Naive thymus-derived CD4-positive, alpha-beta T cell (primary cell): ENCODE measurements at regions of chr16 and their contacts with region 1.

Region 1: GRCh38 chr16:1474796-1475551 is at the start of gene CLCN7:
- DNase-seq: peak; percentile 79 to 95 (median 84)
- ATAC-seq: peak; percentile 91
- H3K4me3 ChIP-seq: peak within 1 kb of the TSS; percentile 67
- H3K4me3 Mint-ChIP-seq: peak within 1 kb of the TSS; percentile 80 to 90 (median 85)
- H3K27ac ChIP-seq: peak within 1 kb of the TSS; percentile 100
- H3K27ac Mint-ChIP-seq: peak within 1 kb of the TSS; percentile 77 to 95 (median 88)
- H3K4me1 ChIP-seq: peaks cover 13 to 20% of the 10 kb centered on the region in 2 donors
- H3K4me1 Mint-ChIP-seq: peaks cover 18 to 52% (median 42%) of the 10 kb centered on the region in 7 donors
- H3K27me3 ChIP-seq: no peaks in the 10 kb centered on the region
- H3K27me3 Mint-ChIP-seq: no peaks in the 10 kb centered on the region
- total RNA-seq, gene CLCN7: 74.8 to 140 (median 115) TPM

Region 2: DNA sequence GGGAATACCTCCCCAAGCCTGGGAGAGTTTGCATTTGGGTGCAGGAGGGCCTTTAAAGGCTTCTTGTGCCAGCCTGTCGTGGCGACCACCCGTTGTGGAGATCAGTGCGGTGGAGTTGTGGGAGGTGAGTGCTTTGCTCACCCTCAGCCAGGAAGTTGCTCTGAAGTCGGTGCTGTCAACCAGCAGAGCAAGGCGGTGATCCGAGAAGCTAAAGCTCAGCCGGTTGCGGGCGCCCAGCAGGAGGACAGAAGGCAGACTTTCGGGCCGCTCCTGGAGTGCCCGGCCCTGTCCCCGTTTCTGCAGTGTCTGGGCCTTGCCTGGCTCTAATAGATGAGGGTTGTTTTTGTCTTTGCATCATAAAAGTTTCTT is 164.2 kb before region 1 on chr16:
- CTCF ChIA-PET with region 1: no interaction called
- POLR2A ChIA-PET with region 1: no interaction called
- intact Hi-C with region 1: no loop called
- DNase-seq: peak in 3 of 9 donors; percentile 36 to 42 (median 41)
- ATAC-seq: no peak
- H3K4me3 ChIP-seq: peak overlapping the region; percentile 63
- H3K4me3 Mint-ChIP-seq: peak overlapping the region; percentile 92 to 100 (median 98)
- H3K27ac ChIP-seq: peak overlapping the region; percentile 71
- H3K27ac Mint-ChIP-seq: peak overlapping the region; percentile 91 to 98 (median 96)
- H3K4me1 ChIP-seq: peaks cover 26 to 33% of the 10 kb centered on the region in 2 donors
- H3K4me1 Mint-ChIP-seq: peaks cover 18 to 58% (median 32%) of the 10 kb centered on the region in 7 donors
- H3K27me3 ChIP-seq: no peaks in the 10 kb centered on the region
- H3K27me3 Mint-ChIP-seq: no peaks in the 10 kb centered on the region

Region 3: GRCh38 chr16:1492923-1493745 is 18.2 kb after region 1 on chr16 and contains the start of gene TELO2:
- CTCF ChIA-PET with region 1: no interaction called
- POLR2A ChIA-PET with region 1: interaction called, 4 read pairs
- intact Hi-C with region 1: loop called (anchors 1 kb)
- DNase-seq: peak; percentile 82 to 96 (median 90)
- ATAC-seq: peak; percentile 96
- H3K4me3 ChIP-seq: peak within 1 kb of the TSS; percentile 59
- H3K4me3 Mint-ChIP-seq: peak within 1 kb of the TSS; percentile 83 to 99 (median 94)
- H3K27ac ChIP-seq: peak within 1 kb of the TSS; percentile 88
- H3K27ac Mint-ChIP-seq: peak within 1 kb of the TSS; percentile 97 to 100 (median 99)
- H3K4me1 ChIP-seq: peaks cover 12 to 17% of the 10 kb centered on the region in 2 donors
- H3K4me1 Mint-ChIP-seq: peaks cover 9 to 20% (median 12%) of the 10 kb centered on the region in 7 donors
- H3K27me3 ChIP-seq: no peaks in the 10 kb centered on the region
- H3K27me3 Mint-ChIP-seq: no peaks in the 10 kb centered on the region
- total RNA-seq, gene TELO2: 46.9 to 58.9 (median 50.3) TPM

Region 4: GRCh38 chr16:1597154-1597553 is 122.2 kb after region 1 on chr16:
- CTCF ChIA-PET with region 1: no interaction called
- POLR2A ChIA-PET with region 1: no interaction called
- intact Hi-C with region 1: no loop called
- DNase-seq: no peak
- ATAC-seq: no peak
- H3K4me3 ChIP-seq: no peak overlapping the region
- H3K4me3 Mint-ChIP-seq: no peak overlapping the region
- H3K27ac ChIP-seq: no peak overlapping the region
- H3K27ac Mint-ChIP-seq: no peak overlapping the region
- H3K4me1 ChIP-seq: no peaks in the 10 kb centered on the region
- H3K4me1 Mint-ChIP-seq: no peaks in the 10 kb centered on the region
- H3K27me3 ChIP-seq: no peaks in the 10 kb centered on the region
- H3K27me3 Mint-ChIP-seq: no peaks in the 10 kb centered on the region

Region 5: DNA sequence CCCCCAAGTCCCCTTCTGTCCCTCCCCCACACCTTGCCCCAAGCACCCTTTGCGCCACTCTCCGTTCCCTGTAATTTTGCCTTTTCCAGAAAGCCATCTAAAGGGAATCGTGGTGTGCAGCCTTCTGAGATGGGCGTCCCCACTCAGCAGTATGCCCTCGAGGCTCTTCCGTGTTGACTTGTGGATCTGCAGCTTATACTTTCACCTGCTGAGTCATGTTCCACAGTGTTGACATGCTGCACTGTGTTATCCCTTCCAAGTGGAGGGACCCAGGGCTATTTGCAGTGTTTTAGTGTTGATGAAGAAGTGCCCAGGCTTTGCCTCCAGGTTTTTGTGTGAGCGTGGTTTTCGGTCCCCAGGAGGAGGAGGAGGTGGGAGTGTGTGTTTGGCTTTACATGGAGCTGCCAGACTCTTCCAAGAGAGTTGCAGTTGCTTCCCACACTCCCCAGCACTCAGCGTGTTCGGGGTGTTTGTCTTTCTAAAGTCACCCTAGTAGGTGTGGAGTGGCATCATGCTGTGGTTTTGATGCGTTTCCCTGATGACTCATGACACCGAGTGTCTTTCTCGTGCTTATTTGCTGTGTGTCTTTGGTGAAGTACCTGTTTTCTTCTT is 171.0 kb after region 1 on chr16:
- CTCF ChIA-PET with region 1: no interaction called
- POLR2A ChIA-PET with region 1: no interaction called
- intact Hi-C with region 1: loop called in 1 of 2 experiments (anchors 1 kb)
- DNase-seq: peak in 1 of 9 donors; percentile 44
- ATAC-seq: peak; percentile 75
- H3K4me3 ChIP-seq: no peak overlapping the region
- H3K4me3 Mint-ChIP-seq: peak overlapping the region in 2 of 10 donors; percentile 40 to 43
- H3K27ac ChIP-seq: no peak overlapping the region
- H3K27ac Mint-ChIP-seq: peak overlapping the region in 5 of 9 donors; percentile 26 to 85 (median 77)
- H3K4me1 ChIP-seq: peaks cover 0 to 8% of the 10 kb centered on the region in 2 donors
- H3K4me1 Mint-ChIP-seq: peaks cover 12 to 24% (median 21%) of the 10 kb centered on the region in 7 donors
- H3K27me3 ChIP-seq: no peaks in the 10 kb centered on the region
- H3K27me3 Mint-ChIP-seq: no peaks in the 10 kb centered on the region